Activated T-helper 2 cell treated with anti-CD3 and anti-CD28 coated beads, Interferon-gamma antibody, Interleukin-2, Interleukin-4, amounts not matched to agents 10 μg/mL and 5 μg/mL and 100 μg/mL, durations not matched to agents 14 hours and 24 hours and 36 hours (primary cell): ENCODE measurements at regions of chr12 and their contacts with region 1.

Region 1: DNA sequence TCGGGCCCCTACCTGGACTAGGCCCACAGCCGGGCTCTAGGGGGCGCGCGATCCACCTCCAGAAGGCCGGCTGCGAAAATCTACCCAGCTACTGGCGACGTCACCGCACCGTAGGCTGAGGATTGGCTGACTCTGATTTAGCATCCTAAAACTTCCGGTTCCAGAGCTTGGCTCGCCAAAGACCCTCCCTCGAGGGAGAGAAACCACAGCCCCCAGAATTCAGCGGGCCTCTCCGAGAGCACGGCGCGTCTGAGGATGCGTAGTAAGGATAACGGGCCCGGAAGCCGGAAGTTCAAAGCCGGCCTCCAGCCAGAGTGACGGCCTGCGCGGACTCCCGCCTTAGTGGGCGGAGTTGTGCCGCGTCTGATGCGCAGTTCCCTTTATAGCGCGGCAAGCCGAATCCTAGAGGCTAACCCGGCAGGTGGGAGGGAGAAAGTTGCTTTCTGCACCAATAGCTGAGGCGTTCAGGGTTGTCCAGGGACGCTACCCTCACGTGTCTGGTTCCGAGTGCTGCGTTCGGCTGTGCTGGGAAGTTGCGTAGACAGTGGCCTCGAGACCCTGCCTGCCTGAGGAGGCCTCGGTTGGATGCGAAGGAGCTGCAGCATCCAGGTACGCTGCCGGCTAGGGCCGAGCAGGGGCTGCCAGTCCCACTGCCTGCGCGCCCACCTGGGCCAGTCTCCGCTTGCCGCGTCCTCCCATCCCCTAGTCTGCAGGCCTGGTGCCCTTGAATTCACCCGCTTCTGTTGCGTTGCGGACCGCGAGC is at the start of gene COX14:
- DNase-seq: peak; percentile 99
- H3K4me3 Mint-ChIP-seq: peak within 1 kb of the TSS; percentile 99
- H3K27ac Mint-ChIP-seq: peak within 1 kb of the TSS; percentile 98
- H3K4me1 Mint-ChIP-seq: peaks cover 24% of the 10 kb centered on the region
- H3K27me3 Mint-ChIP-seq: no peaks in the 10 kb centered on the region
- total RNA-seq, gene COX14: 38.1 and 43.5 TPM in 2 replicates

Region 2: DNA sequence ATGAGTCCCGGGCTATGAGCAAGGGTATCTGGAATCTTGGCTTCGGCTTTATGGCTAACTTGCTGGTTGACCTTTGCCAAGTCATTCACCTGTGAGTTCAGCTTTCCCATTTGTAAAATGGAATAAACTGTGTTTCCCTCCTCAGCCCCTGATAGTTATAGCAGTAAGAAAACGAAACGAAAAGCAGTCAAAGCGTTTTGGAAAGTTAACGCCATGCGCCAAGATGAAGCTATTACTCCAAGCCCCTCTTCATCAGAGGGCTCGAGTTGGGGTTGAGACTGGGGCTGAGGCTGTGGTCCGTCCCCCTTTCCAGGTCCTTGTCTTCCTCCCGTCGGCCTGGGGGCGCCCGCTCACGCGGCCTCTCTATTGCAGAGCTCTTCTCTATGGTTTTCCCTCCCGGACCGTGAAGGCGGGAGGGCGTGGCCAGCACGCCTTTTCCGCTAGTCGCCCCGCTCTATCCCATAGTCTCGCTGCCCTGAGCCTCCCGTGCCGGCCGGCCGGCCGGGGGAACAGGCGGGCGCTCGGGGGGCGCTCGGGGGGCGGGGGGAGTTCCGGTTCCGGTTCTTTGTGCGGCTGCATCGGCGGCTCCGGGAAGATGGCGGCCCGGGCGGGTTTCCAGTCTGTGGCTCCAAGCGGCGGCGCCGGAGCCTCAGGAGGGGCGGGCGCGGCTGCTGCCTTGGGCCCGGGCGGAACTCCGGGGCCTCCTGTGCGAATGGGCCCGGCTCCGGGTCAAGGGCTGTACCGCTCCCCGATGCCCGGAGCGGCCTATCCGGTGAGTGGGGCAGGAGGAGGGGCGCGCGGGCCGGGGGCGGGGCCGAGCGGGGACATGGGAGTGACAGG is 26.9 kb before region 1 on chr12 and contains the start of gene SMARCD1:
- intact Hi-C with region 1: loop called (anchors 1 kb)
- DNase-seq: peak; percentile 77
- H3K4me3 Mint-ChIP-seq: peak within 1 kb of the TSS; percentile 88
- H3K27ac Mint-ChIP-seq: peak within 1 kb of the TSS; percentile 93
- H3K4me1 Mint-ChIP-seq: peaks cover 29% of the 10 kb centered on the region
- H3K27me3 Mint-ChIP-seq: no peaks in the 10 kb centered on the region
- total RNA-seq, gene SMARCD1: 71.5 and 76.8 TPM in 2 replicates